BJ (cell line): ENCODE measurements at regions of chr3 and their contacts with region 1.

Region 1: DNA sequence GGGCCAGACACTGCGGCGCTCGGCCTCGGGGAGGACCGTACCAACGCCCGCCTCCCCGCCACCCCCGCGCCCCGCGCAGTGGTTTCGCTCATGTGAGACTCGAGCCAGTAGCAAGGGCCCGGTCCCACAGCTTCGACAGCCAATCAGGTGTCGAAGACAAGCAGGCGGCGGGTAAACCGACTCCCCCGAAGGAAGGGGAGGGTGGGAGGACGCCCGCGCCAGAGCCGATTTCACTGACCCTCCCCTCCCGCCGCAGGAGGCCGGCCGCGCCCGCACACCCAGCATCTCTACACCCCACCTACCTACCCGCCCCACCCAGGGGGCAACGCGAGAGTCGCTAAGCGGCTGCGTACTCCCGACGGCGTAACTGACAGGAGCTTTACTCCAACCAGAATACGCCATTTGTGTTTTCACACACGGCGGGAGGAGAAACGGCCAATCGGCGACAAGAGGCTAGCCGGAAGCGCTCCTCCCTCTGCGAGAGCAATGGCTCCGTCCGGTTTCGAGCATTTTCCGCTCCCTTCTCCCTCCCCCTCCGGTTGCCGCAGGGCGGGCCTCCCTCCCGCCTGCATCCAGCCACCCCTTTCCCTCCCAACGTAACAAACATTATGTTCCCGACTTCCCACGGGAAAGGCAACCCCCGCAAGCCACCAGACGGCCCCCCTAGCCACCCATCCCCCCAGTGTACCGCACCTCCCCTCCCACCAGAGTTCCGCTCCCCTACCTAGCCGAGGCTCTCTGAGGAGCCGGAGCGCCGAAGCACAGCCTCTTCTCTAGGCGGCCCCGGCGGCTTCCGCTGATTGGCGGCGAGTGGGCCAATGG is 504 bp upstream of the SETD5 start:
- DNase-seq: peak; percentile 98
- H3K4me3 ChIP-seq: peak overlapping the region; percentile 59
- H3K27me3 ChIP-seq: no peaks in the 10 kb centered on the region
- CTCF ChIP-seq: no peak

Region 2: GRCh38 chr3:9028134-9028533 is 368.8 kb before region 1 on chr3:
- CTCF ChIA-PET with region 1: no interaction called
- POLR2A ChIA-PET with region 1: no interaction called
- DNase-seq: no peak
- H3K4me3 ChIP-seq: no peak overlapping the region
- H3K27me3 ChIP-seq: 0 out of 2 replicates have a peak, but pooled peaks cover 4% of the 10 kb centered on the region
- CTCF ChIP-seq: no peak

Region 3: GRCh38 chr3:9362731-9363530 is 34.0 kb before region 1 on chr3 and contains the start of gene THUMPD3:
- CTCF ChIA-PET with region 1: interaction called, 3 read pairs
- POLR2A ChIA-PET with region 1: interaction called, 12 read pairs
- DNase-seq: peak; percentile 49
- H3K4me3 ChIP-seq: peak within 1 kb of the TSS; percentile 58
- H3K27me3 ChIP-seq: no peaks in the 10 kb centered on the region
- CTCF ChIP-seq: 0 out of 2 replicates have a peak, but pooled peaks have one; percentile 6
- polyA plus RNA-seq, gene THUMPD3: 18.2 and 38.5 TPM in 2 replicates

Region 4: DNA sequence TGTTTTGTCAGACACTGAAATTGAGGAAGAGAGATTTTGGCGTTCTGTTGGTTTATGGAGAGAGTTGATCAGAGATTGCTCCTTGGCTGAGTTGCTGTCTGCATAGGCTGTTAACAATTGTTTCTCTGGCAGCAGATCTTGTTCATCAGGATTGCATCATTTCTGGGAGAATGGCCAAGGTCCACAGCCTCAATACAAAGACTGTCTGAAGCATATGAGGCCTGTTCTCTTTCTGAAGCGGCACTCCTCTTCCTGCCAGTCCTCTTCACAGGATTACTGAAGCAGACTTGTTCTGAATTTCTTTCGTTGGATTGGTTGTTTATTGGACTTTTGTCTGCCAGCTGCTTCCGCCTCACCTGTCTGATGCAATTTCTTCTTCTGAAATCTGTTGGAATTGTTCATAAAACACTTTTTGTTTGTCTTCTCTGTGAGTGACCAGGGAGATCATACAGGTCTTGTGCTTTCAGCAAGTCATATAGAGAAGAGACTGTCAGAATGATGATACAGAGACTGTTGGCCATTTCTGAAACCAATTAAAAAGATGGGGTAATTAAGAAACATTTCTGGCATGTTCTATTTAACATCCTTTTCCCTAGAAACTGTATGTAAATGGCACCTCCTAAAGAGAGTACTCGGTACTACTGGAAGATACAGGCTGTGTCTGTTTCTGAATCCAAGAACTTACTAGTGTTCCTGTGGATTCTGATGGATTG is 26.0 kb after region 1 on chr3:
- CTCF ChIA-PET with region 1: interaction called, 3 read pairs
- POLR2A ChIA-PET with region 1: interaction called, 12 read pairs
- DNase-seq: peak; percentile 89
- H3K4me3 ChIP-seq: peak overlapping the region; percentile 4; the same call in 1 of the 2 replicates
- H3K27me3 ChIP-seq: no peaks in the 10 kb centered on the region
- CTCF ChIP-seq: peak; percentile 56